Heart left ventricle (tissue), 16 donors: ENCODE measurements at regions of chr9 and their contacts with region 1.

Region 1: DNA sequence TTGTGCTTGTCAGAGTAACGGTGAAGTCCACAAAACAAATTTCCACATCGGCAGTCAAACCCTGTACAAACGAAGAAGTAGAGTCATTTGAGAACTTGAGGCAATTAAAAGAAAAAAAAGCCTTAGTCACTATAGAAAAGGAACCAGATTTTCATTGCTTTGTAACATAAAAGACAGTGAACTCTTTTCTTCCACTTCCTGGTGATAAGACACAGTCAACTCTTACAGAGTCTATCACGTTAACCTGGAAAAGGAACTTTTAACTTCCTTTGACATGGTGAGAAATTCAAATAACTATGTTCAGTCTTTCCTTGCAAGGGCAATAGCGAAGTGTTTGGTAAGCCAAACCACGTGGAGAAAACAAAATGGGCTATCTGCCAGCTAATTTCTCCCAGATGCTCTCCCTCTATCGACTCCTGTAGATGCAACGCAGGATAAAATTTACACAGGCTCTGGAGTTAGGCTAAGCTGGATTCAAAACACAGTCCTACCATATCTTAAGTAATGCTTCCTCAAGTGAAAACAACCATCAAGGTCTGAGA is 8.9 kb downstream of the ZFAND5 start:
- DNase-seq: no peak
- ATAC-seq: peak in 1 of 4 donors; percentile 13
- H3K4me3 ChIP-seq: no peak overlapping the region
- H3K27ac ChIP-seq: peak overlapping the region in 4 of 12 donors; percentile 11 to 59 (median 27)
- H3K4me1 ChIP-seq: peaks cover 11 to 80% (median 64%) of the 10 kb centered on the region in 12 donors
- H3K27me3 ChIP-seq: no peaks in the 10 kb centered on the region
- CTCF ChIP-seq: no peak
- POLR2A ChIP-seq: no peak

Region 2: DNA sequence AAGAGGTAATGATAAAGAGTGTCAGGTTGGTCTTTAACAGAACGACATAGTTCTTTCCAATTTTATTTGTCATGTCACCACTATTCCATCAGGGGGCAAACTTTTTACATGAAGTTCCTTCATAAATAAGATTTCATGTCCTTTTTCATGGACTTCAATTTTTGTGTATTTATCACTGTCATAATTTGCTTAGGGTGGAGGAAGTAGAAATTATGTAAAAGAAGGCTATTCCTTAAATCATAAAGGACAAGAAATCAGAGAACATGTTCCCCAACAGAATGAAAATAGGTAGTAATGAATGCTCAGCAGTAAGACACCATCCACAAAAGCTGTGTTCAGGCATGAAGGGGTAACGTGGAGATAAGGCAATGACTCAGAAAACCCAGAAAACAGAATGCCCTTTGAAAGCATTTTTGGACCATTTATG is 63.8 kb before region 1 on chr9:
- intact Hi-C with region 1: loop called in 3 of 10 experiments (anchors 5 to 10 kb)
- DNase-seq: no peak
- ATAC-seq: peak in 1 of 4 donors; percentile 65
- H3K4me3 ChIP-seq: no peak overlapping the region
- H3K27ac ChIP-seq: peak overlapping the region in 1 of 12 donors; percentile 74
- H3K4me1 ChIP-seq: peaks cover 0 to 28% (median 3%) of the 10 kb centered on the region in 12 donors
- H3K27me3 ChIP-seq: no peaks in the 10 kb centered on the region
- CTCF ChIP-seq: peak; percentile 39 to 80 (median 66)
- POLR2A ChIP-seq: no peak

Region 3: DNA sequence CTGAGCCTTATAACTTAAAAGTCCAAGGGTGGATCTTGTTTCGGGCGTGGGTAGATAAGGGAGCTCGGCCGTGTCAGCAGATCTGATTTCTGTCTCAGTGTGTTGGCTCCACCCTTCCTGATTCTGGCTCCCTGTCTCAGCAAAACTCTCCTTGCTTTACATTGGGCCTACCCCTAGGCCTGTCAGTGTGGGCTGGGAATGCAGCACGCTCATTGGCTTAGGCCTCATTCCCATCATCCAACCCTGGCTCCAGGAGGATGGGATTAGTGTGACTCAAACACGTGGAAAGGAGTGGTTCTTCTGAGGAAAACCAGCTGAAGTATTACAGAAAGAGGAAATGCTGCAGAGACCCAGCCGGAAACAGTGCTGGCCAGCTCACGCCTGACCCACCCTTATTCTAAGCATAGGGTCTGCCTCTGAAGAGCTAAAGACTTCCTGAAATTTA is 51.0 kb before region 1 on chr9:
- intact Hi-C with region 1: loop called in 3 of 10 experiments (anchors 5 to 10 kb)
- DNase-seq: peak; percentile 79 to 89 (median 85)
- ATAC-seq: peak; percentile 98 to 100 (median 99)
- H3K4me3 ChIP-seq: peak overlapping the region in 9 of 12 donors; percentile 22 to 70 (median 42)
- H3K27ac ChIP-seq: peak overlapping the region; percentile 9 to 91 (median 80)
- H3K4me1 ChIP-seq: peaks cover 0 to 33% (median 1%) of the 10 kb centered on the region in 12 donors
- H3K27me3 ChIP-seq: no peaks in the 10 kb centered on the region
- CTCF ChIP-seq: no peak
- POLR2A ChIP-seq: peak in 1 of 2 donors; percentile 65

Region 4: GRCh38 chr9:72415163-72415562 is 59.1 kb after region 1 on chr9:
- intact Hi-C with region 1: loop called in 1 of 10 experiments (anchors 10 kb)
- DNase-seq: no peak
- ATAC-seq: no peak
- H3K4me3 ChIP-seq: no peak overlapping the region
- H3K27ac ChIP-seq: no peak overlapping the region
- H3K4me1 ChIP-seq: no peaks in the 10 kb centered on the region
- H3K27me3 ChIP-seq: no peaks in the 10 kb centered on the region
- CTCF ChIP-seq: no peak
- POLR2A ChIP-seq: no peak